ENCODE measurements at regions of chr17 and their contacts with region 1.

Region 1: DNA sequence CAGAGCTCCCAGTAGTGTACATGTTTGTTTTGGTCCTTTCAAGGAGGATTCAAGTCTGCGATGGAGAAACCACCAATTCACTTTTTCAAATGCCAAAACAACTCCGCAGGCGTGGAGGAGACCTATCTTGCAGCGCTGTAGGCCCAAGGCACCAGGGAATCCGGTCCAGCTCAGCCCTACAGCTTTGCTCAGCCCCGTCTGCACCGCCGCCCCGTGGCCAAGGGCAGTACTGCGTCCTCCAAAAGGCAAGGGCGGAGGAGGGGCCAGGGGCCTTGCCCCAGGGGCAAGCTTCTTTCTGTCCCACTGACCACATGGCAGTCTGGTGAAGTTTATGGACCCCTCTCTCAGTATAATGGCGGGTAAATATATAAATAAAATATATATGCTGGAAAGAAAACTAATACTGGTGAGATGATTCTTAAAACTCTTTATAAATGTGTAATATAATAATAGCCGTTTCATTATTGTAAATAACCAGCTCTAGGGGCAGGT is 709 bp upstream of the CD300LG start:
- DNase-seq: peak; percentile 87 to 97
- ATAC-seq: peak; percentile 77 to 89
- H3K4me3 ChIP-seq: no peak overlapping the region
- H3K27ac ChIP-seq: peak overlapping the region in 1 of 2 experiments; percentile 62; a peak in 4 of 6 replicates
- H3K4me1 ChIP-seq: peaks cover 19% of the 10 kb centered on the region
- CTCF ChIP-seq: peak; percentile 92
- EP300 ChIP-seq: no peak
- POLR2A ChIP-seq: no peak
- RAD21 ChIP-seq: peak; percentile 80 to 82

Region 2: DNA sequence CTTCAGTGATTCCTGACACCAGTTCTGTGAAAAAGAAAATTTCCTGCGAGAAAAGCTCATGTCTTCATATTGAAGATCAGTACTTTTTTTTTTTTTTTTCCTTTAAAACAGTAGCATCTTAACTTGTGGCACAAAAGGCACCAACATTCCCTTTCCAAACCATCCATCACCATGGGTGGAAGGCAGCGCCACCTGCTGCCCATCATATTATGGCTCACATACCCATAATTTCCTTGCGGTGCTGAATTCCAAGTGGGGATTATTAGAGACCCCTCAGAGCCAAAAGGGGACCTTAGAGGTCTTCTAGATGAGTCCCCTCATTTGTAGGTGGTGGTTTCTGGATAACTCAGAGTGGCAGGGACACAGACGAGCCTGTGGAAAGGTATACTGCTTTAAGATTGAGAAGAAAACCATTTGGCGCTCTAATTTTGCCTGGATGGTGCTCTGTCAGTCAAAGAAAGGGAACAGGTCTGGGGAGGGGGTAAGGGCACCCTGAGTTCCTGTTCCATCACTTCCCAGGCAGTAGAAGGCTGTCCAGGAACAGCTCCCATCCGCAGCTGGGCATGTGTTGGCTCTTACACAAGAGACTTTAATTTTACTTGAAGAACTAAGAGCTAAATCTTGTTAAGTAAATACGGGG is 79.7 kb before region 1 on chr17:
- CTCF ChIA-PET with region 1: interaction called, 25 read pairs
- POLR2A ChIA-PET with region 1: interaction called, 3 read pairs
- DNase-seq: peak; percentile 76 to 88
- ATAC-seq: peak; percentile 42 to 73; a peak in 4 of 6 replicates
- H3K4me3 ChIP-seq: no peak overlapping the region
- H3K27ac ChIP-seq: no peak overlapping the region
- H3K4me1 ChIP-seq: no peaks in the 10 kb centered on the region
- CTCF ChIP-seq: peak; percentile 96
- EP300 ChIP-seq: no peak
- POLR2A ChIP-seq: no peak
- RAD21 ChIP-seq: peak; percentile 35 to 64; a peak in 4 of 5 replicates

Region 3: GRCh38 chr17:43790311-43790940 is 55.8 kb before region 1 on chr17:
- CTCF ChIA-PET with region 1: interaction called, 11 read pairs
- POLR2A ChIA-PET with region 1: no interaction called
- DNase-seq: no peak
- ATAC-seq: peak in 1 of 2 experiments; percentile 67; a peak in 3 of 6 replicates
- H3K4me3 ChIP-seq: no peak overlapping the region
- H3K27ac ChIP-seq: no peak overlapping the region
- H3K4me1 ChIP-seq: no peaks in the 10 kb centered on the region
- CTCF ChIP-seq: no peak
- EP300 ChIP-seq: no peak
- POLR2A ChIP-seq: no peak
- RAD21 ChIP-seq: peak in 1 of 2 experiments; percentile 37; a peak in 1 of 5 replicates

Region 4: GRCh38 chr17:43814714-43815113 is 31.6 kb before region 1 on chr17:
- CTCF ChIA-PET with region 1: interaction called, 37 read pairs
- POLR2A ChIA-PET with region 1: interaction called, 3 read pairs
- DNase-seq: peak in 1 of 2 experiments; percentile 51
- ATAC-seq: peak in 1 of 2 experiments; percentile 45; a peak in 3 of 6 replicates
- H3K4me3 ChIP-seq: no peak overlapping the region; the same call in 2 of the 3 replicates
- H3K27ac ChIP-seq: peak overlapping the region; percentile 53 to 75; a peak in 5 of 6 replicates
- H3K4me1 ChIP-seq: peaks cover 21% of the 10 kb centered on the region
- CTCF ChIP-seq: no peak
- EP300 ChIP-seq: no peak
- POLR2A ChIP-seq: no peak
- RAD21 ChIP-seq: no peak

Region 5: DNA sequence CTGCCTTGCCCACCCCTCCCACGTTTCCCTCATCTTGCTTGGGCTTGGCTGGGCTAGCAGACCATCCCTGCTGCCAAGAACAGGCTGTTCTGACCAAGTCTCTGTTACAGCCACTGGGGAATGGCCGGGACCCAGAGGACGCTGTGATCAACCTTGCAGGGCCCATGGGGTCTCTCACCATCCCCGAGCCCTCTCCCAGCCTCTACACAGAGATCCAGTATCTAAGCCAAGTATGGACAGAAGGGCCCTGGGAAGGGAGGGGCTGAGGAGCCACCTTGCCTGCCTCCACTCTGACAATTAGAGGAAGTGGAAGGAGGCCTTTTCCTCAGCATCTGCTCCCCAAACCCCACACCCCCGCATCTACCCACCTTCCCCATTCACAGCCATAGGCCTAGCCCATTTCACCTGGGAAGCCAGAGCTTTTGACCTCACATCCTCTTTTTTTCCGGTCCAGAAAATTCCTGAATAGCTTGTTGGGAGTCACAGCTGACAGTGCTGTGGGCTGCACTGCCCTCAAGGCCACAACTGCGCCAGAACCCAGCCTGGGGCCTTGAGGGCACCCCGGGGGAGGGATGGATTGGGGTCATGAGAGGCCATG is 14.9 kb after region 1 on chr17:
- CTCF ChIA-PET with region 1: interaction called, 168 read pairs
- POLR2A ChIA-PET with region 1: interaction called, 4 read pairs
- DNase-seq: no peak
- ATAC-seq: no peak
- H3K4me3 ChIP-seq: no peak overlapping the region
- H3K27ac ChIP-seq: no peak overlapping the region; a peak in 1 of 6 replicates
- H3K4me1 ChIP-seq: peaks cover 5% of the 10 kb centered on the region; the same call in 1 of the 3 replicates
- CTCF ChIP-seq: no peak
- EP300 ChIP-seq: no peak
- POLR2A ChIP-seq: no peak
- RAD21 ChIP-seq: no peak

Region 6: DNA sequence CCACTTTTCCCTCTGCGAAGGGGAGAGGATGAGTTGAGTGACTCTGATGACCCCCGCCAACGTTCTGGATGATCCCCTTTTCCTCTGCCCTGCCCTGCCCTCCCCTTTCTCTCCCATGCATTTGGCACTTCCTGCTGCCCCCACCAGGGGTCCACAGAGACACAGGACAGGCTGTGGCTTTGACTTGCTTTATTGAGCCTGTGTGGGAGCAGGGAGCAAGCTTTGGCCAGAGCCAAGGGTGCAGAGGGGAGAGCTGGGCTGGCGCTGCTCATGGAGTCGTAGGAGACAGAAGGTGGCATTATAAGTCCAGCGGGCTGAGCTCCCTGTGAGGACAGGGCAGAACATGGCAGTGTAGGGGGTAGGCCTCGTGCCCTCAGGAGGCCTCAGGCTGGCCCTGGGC is 94.4 kb after region 1 on chr17:
- CTCF ChIA-PET with region 1: interaction called, 11 read pairs
- POLR2A ChIA-PET with region 1: no interaction called
- DNase-seq: peak; percentile 57 to 58
- ATAC-seq: peak; percentile 54 to 79
- H3K4me3 ChIP-seq: no peak overlapping the region
- H3K27ac ChIP-seq: no peak overlapping the region
- H3K4me1 ChIP-seq: peaks cover 9% of the 10 kb centered on the region; the same call in 2 of the 3 replicates
- CTCF ChIP-seq: peak; percentile 37
- EP300 ChIP-seq: no peak
- POLR2A ChIP-seq: no peak
- RAD21 ChIP-seq: peak; percentile 34 to 56; a peak in 3 of 5 replicates